Heart left ventricle (tissue), 16 donors: ENCODE measurements at regions of chr20 and their contacts with region 1.

Region 1: DNA sequence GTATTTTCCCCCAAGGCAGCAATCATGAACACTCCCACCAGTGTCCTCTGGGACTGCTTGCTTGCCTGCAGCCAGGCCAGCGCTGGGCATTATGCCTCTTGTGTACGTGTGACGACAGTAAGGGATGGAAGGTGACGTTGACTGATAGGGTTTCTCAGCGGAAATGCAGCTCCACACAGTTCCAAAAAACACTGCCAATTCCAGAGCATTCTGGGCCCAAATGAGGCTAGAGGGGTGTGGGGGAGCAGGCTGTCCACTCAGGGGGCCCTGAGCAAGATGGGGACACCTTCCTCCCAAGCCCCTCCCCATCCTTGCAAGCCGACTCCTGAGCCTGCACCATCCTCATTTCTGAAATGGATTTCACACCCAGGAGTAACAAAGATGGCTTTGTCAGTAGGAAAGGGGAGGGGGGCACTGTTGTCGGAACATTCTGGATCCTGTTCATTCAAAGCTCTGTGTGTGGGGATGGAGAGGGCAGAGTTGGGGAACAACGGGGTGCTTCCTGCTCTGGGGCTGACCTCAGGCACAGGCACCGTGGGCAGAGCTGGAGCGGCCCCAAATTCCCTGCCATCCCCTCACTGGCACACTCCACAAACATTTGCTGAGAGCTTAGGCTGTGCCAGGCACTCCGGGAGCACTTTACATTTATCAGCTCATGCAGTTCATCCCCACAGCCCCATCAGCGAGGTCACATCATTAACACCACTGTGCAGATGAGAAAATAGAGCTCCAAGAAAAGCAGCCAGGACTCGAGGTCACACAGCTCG is 20.0 kb downstream of the PREX1 start:
- DNase-seq: peak in 3 of 5 donors; percentile 53 to 82 (median 79)
- ATAC-seq: peak; percentile 79 to 90 (median 87)
- H3K4me3 ChIP-seq: peak overlapping the region in 3 of 12 donors; percentile 8 to 21 (median 10)
- H3K27ac ChIP-seq: peak overlapping the region in 8 of 12 donors; percentile 17 to 67 (median 50)
- H3K4me1 ChIP-seq: peaks cover 0 to 68% (median 12%) of the 10 kb centered on the region in 12 donors
- H3K27me3 ChIP-seq: no peaks in the 10 kb centered on the region
- CTCF ChIP-seq: no peak
- POLR2A ChIP-seq: no peak

Region 2: GRCh38 chr20:48648550-48648951 is 159.3 kb before region 1 on chr20:
- intact Hi-C with region 1: no loop called
- DNase-seq: peak in 2 of 5 donors; percentile 43 to 63
- ATAC-seq: peak; percentile 64 to 77 (median 65)
- H3K4me3 ChIP-seq: no peak overlapping the region
- H3K27ac ChIP-seq: no peak overlapping the region
- H3K4me1 ChIP-seq: peaks cover 0 to 6% (median 0%) of the 10 kb centered on the region in 12 donors
- H3K27me3 ChIP-seq: no peaks in the 10 kb centered on the region
- CTCF ChIP-seq: no peak
- POLR2A ChIP-seq: no peak

Region 3: GRCh38 chr20:48697879-48698724 is 109.7 kb before region 1 on chr20:
- intact Hi-C with region 1: loop called in 1 of 10 experiments (anchors 5 kb)
- DNase-seq: peak; percentile 78 to 94 (median 87)
- ATAC-seq: peak; percentile 88 to 96 (median 94)
- H3K4me3 ChIP-seq: no peak overlapping the region
- H3K27ac ChIP-seq: peak overlapping the region in 10 of 12 donors; percentile 10 to 77 (median 37)
- H3K4me1 ChIP-seq: peaks cover 0 to 23% (median 14%) of the 10 kb centered on the region in 12 donors
- H3K27me3 ChIP-seq: no peaks in the 10 kb centered on the region
- CTCF ChIP-seq: no peak
- POLR2A ChIP-seq: no peak